ENCODE measurements at regions of chr2 and their contacts with region 1.

Region 1: DNA sequence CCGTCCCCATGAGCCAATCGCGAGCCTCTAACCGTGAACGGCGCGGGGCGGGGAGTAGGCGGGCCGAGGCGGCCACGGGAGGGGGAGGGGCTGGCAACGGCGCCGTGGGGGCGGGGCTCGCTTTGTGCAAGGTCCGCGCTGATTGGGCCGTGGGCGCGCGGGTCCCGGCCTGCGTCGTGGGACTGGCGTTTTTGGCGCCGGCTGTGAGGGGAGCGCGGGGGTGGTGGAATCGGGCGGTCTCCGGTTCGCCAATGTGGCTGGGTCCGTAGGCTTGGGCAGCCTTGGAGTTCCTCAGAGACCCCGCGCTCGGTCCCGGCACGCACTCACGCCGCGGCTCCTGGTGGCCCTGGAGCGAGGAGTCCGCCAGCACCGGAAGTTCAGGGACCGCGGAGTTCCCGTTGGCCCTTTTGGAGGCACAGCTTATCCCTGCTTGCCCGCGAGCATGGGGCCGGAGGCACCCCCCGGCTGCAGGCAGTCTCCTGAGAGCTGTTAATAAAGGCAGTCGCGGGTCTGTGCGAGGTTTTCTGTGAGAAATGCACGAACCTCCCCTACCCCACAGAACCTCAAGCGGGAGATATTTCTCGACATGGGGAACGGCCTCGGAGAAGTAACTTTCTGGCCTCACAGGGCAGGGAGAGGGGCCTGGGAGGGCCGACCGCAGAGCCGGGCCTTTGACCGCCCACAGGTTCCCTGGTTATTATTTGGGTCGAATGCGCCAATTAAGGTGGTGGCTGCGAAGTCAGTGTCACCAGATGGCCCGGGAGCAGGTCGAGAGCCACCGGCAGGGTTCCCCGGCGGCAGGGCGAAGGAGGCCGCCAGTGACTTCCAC is 506 bp upstream of the NCL start:
- DNase-seq: no peak
- H3K4me3 ChIP-seq: peak overlapping the region; percentile 80
- H3K27me3 ChIP-seq: no peaks in the 10 kb centered on the region
- CTCF ChIP-seq: no peak

Region 2: DNA sequence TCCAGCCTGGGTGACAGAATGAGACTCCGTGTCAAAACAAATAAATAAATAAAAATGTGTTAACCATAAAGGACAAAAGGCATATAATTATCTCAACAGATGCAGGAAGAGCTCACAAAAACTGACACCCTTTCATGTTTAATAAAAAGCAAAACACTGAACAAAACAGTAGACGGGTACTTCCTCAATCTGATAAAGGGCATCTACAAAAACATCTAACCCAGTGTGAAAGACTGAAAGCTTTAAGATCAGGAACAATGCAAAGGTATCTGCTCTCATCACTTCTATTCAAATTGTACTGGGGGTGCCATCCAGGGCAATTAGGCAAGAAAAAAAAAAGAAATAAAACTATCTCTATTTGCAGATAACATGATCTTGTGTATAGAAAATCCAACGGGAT is 11.2 kb after region 1 on chr2:
- CTCF ChIA-PET with region 1: interaction called, 45 read pairs
- POLR2A ChIA-PET with region 1: interaction called, 7 read pairs
- DNase-seq: no peak
- H3K4me3 ChIP-seq: no peak overlapping the region
- H3K27me3 ChIP-seq: no peaks in the 10 kb centered on the region
- CTCF ChIP-seq: no peak

Region 3: GRCh38 chr2:231482806-231483391 is 18.1 kb after region 1 on chr2:
- CTCF ChIA-PET with region 1: interaction called, 45 read pairs
- POLR2A ChIA-PET with region 1: interaction called, 7 read pairs
- DNase-seq: no peak
- H3K4me3 ChIP-seq: peak overlapping the region; percentile 10
- H3K27me3 ChIP-seq: no peaks in the 10 kb centered on the region
- CTCF ChIP-seq: peak; percentile 95

Region 4: GRCh38 chr2:231563378-231563961 is 98.7 kb after region 1 on chr2:
- CTCF ChIA-PET with region 1: no interaction called
- POLR2A ChIA-PET with region 1: no interaction called
- DNase-seq: no peak
- H3K4me3 ChIP-seq: no peak overlapping the region
- H3K27me3 ChIP-seq: peaks cover 1% of the 10 kb centered on the region
- CTCF ChIP-seq: peak; percentile 85